Lower leg skin (tissue), 4 donors: ENCODE measurements at regions of chr22 and their contacts with region 1.

Region 1: DNA sequence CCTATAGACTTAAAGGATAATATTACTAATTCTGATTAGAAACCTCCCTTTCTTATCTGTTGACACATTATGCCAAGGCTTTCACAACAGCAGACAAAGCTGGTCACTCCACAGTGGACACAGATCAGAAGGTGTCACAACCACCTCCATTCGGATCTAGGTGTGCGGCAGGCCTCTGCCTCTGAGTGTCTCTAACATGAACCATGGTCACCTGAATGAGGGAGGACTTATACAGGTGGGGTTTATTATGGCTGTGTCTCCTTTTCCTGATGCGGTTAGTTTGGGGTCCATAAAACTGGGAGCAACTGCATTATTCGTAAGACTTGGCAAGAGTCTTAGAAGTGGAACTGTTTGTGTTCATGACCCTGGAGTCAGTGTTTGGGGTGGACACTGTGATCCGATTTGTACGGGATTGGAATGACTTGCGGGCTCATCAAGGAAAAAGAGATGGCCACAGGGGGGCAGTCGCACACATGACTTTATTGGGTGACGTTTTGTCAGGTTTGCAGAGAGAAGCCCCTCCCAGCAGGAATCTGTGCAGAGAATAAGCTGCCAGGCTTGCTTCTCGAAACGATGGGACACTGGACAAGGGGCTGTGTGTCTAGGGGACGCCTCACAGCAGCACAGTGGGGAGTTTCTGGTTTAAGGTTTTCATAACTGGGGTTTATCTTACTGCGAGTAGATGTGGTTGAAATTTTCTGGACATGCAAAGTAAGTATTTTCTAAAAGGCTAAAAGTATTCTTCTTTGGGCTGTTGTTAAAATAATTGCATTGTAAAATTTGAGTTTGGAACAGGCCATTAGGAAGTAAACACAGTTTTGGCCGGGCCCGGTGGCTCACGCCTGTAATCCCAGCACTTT is 90.6 kb downstream of the GAB4 start:
- DNase-seq: peak; percentile 40 to 91
- H3K4me3 ChIP-seq: no peak overlapping the region
- CTCF ChIP-seq: no peak
- POLR2A ChIP-seq: no peak

Region 2: GRCh38 chr22:16854631-16855030 is 62.7 kb before region 1 on chr22:
- intact Hi-C with region 1: no loop called
- DNase-seq: no peak
- H3K4me3 ChIP-seq: no peak overlapping the region
- CTCF ChIP-seq: no peak
- POLR2A ChIP-seq: no peak

Region 3: DNA sequence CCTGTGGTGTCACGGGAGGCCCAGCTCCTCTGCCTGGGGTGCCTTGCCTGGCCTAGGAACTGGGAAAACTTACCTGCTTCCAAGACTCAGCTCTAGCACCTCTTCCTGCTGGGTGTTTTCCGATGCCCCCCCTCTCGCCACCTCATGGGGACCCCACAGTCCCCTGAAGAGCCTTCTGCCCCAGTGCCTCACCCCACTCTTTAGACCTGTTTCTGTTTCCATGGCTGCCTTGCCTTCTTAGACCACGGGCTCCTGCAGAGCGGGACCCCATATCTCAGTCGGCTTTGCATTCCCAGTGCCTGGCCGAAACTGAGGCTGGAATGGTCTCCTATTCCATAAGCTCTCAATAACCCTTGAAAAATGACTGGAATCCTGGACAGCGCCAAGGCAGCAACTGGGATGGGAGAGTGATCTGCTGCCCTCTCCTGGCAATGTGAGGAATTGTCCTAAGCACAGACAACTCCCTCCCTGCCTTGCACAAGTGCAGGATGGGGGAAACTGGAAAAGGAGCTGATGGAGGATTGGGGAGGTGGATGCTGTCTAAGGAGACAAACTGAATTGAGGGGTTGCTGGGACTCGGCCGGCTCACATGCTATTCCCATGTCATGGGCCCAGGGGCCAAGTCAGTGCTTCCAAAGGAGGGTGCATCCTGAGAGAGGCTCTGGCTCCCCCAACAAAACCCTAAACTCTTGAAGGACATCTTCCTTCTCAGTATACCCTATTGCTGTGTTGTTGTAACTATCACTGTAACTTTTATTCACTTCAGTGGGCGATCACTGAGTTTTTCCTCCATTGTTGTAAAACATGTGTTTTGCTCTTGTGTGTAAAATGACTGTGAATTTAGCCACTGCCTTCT is 140.8 kb after region 1 on chr22:
- intact Hi-C with region 1: loop called (anchors 5 kb)
- DNase-seq: peak; percentile 60 to 91
- H3K4me3 ChIP-seq: no peak overlapping the region
- CTCF ChIP-seq: peak in 1 of 3 donors; percentile 24
- POLR2A ChIP-seq: no peak